Naive thymus-derived CD4-positive, alpha-beta T cell (primary cell): ENCODE measurements at regions of chr11 and their contacts with region 1.

Region 1: GRCh38 chr11:65888163-65888814 is at the start of gene FIBP:
- DNase-seq: peak; percentile 84 to 95 (median 90)
- ATAC-seq: peak; percentile 74
- H3K4me3 ChIP-seq: peak within 1 kb of the TSS; percentile 84
- H3K4me3 Mint-ChIP-seq: peak within 1 kb of the TSS; percentile 88 to 97 (median 93)
- H3K27ac ChIP-seq: peak within 1 kb of the TSS; percentile 92
- H3K27ac Mint-ChIP-seq: peak within 1 kb of the TSS; percentile 93 to 99 (median 97)
- H3K4me1 ChIP-seq: peaks cover 37 to 45% of the 10 kb centered on the region in 2 donors
- H3K4me1 Mint-ChIP-seq: peaks cover 50 to 69% (median 53%) of the 10 kb centered on the region in 7 donors
- H3K27me3 ChIP-seq: no peaks in the 10 kb centered on the region
- H3K27me3 Mint-ChIP-seq: no peaks in the 10 kb centered on the region
- total RNA-seq, gene FIBP: 25.9 to 72.1 (median 43.4) TPM

Region 2: GRCh38 chr11:65711785-65712632 is 176.3 kb before region 1 on chr11 and contains the start of gene KAT5:
- CTCF ChIA-PET with region 1: interaction called, 10 read pairs
- POLR2A ChIA-PET with region 1: interaction called, 15 read pairs
- intact Hi-C with region 1: loop called (anchors 1 kb)
- DNase-seq: peak; percentile 95 to 99 (median 98)
- ATAC-seq: peak; percentile 87
- H3K4me3 ChIP-seq: peak within 1 kb of the TSS; percentile 100
- H3K4me3 Mint-ChIP-seq: peak within 1 kb of the TSS; percentile 91 to 99 (median 95)
- H3K27ac ChIP-seq: peak within 1 kb of the TSS; percentile 95
- H3K27ac Mint-ChIP-seq: peak within 1 kb of the TSS; percentile 93 to 100 (median 99)
- H3K4me1 ChIP-seq: peaks cover 5 to 9% of the 10 kb centered on the region in 2 donors
- H3K4me1 Mint-ChIP-seq: peaks cover 12 to 41% (median 25%) of the 10 kb centered on the region in 7 donors
- H3K27me3 ChIP-seq: no peaks in the 10 kb centered on the region
- H3K27me3 Mint-ChIP-seq: peaks cover 0 to 5% (median 0%) of the 10 kb centered on the region in 5 donors
- total RNA-seq, gene KAT5: 68.6 to 133 (median 113) TPM

Region 3: GRCh38 chr11:65833297-65834030 is 54.8 kb before region 1 on chr11 and contains the start of gene SNX32:
- CTCF ChIA-PET with region 1: interaction called, 11 read pairs
- POLR2A ChIA-PET with region 1: interaction called, 6 read pairs
- intact Hi-C with region 1: no loop called
- DNase-seq: peak; percentile 88 to 94 (median 93)
- ATAC-seq: peak; percentile 100
- H3K4me3 ChIP-seq: peak within 1 kb of the TSS; percentile 91
- H3K4me3 Mint-ChIP-seq: no peak within 1 kb of the TSS
- H3K27ac ChIP-seq: peak within 1 kb of the TSS; percentile 78
- H3K27ac Mint-ChIP-seq: peak within 1 kb of the TSS in 1 of 9 donors; percentile 91
- H3K4me1 ChIP-seq: peaks cover 10 to 13% of the 10 kb centered on the region in 2 donors
- H3K4me1 Mint-ChIP-seq: peaks cover 7 to 17% (median 7%) of the 10 kb centered on the region in 7 donors
- H3K27me3 ChIP-seq: no peaks in the 10 kb centered on the region
- H3K27me3 Mint-ChIP-seq: peaks cover 0 to 21% (median 0%) of the 10 kb centered on the region in 5 donors
- total RNA-seq, gene SNX32: 0.81 to 2.0 (median 1.1) TPM

Region 4: DNA sequence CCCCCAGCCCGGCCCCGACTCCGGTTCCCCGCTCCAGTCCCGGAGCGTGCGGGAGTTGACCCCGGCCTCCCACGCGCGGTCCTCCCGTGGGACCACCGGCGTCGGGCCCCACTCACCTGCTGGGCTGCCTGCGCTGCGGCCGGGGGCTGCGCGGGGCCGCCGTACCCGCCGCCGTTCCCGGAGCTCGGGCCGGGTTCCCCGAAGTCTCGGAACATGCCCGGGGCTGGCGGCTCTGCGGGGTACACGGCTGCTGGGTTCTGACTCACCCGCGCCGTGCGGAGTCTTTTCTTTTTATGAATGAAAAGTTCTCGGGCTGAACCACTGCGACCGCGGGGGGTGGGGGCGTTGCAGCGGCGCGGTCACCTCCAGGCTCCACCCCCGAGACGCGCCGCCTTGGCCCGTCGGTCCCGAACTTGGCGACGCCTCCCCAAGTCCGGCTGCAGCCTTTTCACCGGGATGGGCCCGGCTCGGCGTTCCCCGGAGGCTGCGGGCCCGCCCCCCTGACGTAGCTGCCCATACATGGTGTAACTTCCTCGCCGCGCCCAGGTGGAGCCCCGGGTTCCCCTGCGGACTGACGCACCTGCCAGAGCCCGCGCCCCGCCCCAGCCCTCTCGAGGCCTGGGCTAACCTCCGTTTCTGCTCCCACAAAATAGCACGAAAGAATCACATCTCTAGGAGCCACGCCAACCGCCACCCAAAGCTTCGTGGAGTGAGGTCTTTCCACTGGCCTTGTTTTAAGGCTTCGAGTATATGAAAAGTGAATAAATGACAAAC is 12.0 kb after region 1 on chr11 and contains the start of gene FOSL1:
- CTCF ChIA-PET with region 1: interaction called, 36 read pairs
- POLR2A ChIA-PET with region 1: interaction called, 108 read pairs
- intact Hi-C with region 1: loop called (anchors 1 kb)
- DNase-seq: peak; percentile 83 to 97 (median 89)
- ATAC-seq: peak; percentile 95
- H3K4me3 ChIP-seq: peak within 1 kb of the TSS; percentile 51
- H3K4me3 Mint-ChIP-seq: peak within 1 kb of the TSS; percentile 64 to 81 (median 74)
- H3K27ac ChIP-seq: peak within 1 kb of the TSS; percentile 47
- H3K27ac Mint-ChIP-seq: peak within 1 kb of the TSS in 6 of 9 donors; percentile 43 to 88 (median 80)
- H3K4me1 ChIP-seq: peaks cover 17 to 19% of the 10 kb centered on the region in 2 donors
- H3K4me1 Mint-ChIP-seq: peaks cover 6 to 42% (median 10%) of the 10 kb centered on the region in 7 donors
- H3K27me3 ChIP-seq: peaks cover 0 to 6% of the 10 kb centered on the region in 2 donors
- H3K27me3 Mint-ChIP-seq: peaks cover 0 to 11% (median 3%) of the 10 kb centered on the region in 5 donors
- total RNA-seq, gene FOSL1: 2.8 to 25.7 (median 4.0) TPM in 3 of 5 experiments, not detected in the others

Region 5: DNA sequence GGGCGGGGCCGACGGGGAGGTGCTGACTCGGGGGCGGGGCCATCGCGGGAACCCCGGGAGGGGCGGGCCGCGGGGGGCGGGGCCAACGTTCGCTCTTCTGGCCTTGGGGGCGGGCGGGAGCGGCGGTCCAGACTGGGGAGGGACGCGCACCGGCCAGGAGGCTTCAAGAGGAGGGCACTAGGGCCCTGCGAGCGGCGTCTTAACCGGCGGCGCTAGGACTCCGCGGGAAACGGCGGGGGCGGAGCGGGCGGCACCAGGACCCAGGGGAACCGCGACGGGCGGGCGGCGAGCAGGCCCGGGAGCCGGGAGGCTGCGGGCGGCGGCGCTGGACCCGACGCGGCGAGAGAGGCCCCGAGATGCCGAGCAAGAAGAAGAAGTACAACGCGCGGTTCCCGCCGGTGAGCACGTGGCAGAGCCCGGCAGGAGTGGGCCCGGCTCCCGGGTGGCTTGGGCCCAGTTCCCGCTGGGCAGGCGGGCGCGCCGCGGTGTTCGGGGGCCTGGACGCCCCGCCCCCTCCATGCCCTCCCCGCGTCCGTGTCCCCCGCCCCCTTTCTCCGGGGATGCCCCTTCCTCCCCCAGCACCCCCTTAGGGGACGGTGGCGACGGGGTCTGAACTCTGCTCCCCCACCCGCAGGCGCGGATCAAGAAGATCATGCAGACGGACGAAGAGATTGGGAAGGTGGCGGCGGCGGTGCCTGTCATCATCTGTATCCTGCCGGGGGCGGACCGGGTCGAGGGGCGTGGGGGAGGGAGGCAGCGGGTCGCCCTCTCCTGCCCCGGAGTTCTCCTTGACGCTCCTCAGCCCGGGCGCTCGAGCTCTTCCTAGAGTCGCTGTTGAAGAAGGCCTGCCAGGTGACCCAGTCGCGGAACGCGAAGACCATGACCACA is 31.1 kb after region 1 on chr11 and contains the start of gene DRAP1:
- CTCF ChIA-PET with region 1: interaction called, 13 read pairs
- POLR2A ChIA-PET with region 1: interaction called, 54 read pairs
- intact Hi-C with region 1: loop called (anchors 1 kb)
- DNase-seq: peak; percentile 95 to 98 (median 97)
- ATAC-seq: peak; percentile 93
- H3K4me3 ChIP-seq: peak within 1 kb of the TSS; percentile 83
- H3K4me3 Mint-ChIP-seq: peak within 1 kb of the TSS; percentile 86 to 96 (median 93)
- H3K27ac ChIP-seq: peak within 1 kb of the TSS; percentile 95
- H3K27ac Mint-ChIP-seq: peak within 1 kb of the TSS; percentile 79 to 96 (median 90)
- H3K4me1 ChIP-seq: peaks cover 26 to 28% of the 10 kb centered on the region in 2 donors
- H3K4me1 Mint-ChIP-seq: peaks cover 32 to 61% (median 36%) of the 10 kb centered on the region in 7 donors
- H3K27me3 ChIP-seq: no peaks in the 10 kb centered on the region
- H3K27me3 Mint-ChIP-seq: no peaks in the 10 kb centered on the region
- total RNA-seq, gene DRAP1: 72.6 to 166 (median 81.9) TPM

Region 6: GRCh38 chr11:65988791-65989592 is 100.7 kb after region 1 on chr11:
- CTCF ChIA-PET with region 1: interaction called, 85 read pairs
- POLR2A ChIA-PET with region 1: interaction called, 14 read pairs
- intact Hi-C with region 1: loop called (anchors 1 kb)
- DNase-seq: peak; percentile 66 to 95 (median 91)
- ATAC-seq: peak; percentile 100
- H3K4me3 ChIP-seq: no peak overlapping the region
- H3K4me3 Mint-ChIP-seq: no peak overlapping the region
- H3K27ac ChIP-seq: no peak overlapping the region
- H3K27ac Mint-ChIP-seq: peak overlapping the region; percentile 0 to 90 (median 74)
- H3K4me1 ChIP-seq: no peaks in the 10 kb centered on the region
- H3K4me1 Mint-ChIP-seq: peaks cover 5 to 7% (median 6%) of the 10 kb centered on the region in 7 donors
- H3K27me3 ChIP-seq: no peaks in the 10 kb centered on the region
- H3K27me3 Mint-ChIP-seq: no peaks in the 10 kb centered on the region

Region 7: DNA sequence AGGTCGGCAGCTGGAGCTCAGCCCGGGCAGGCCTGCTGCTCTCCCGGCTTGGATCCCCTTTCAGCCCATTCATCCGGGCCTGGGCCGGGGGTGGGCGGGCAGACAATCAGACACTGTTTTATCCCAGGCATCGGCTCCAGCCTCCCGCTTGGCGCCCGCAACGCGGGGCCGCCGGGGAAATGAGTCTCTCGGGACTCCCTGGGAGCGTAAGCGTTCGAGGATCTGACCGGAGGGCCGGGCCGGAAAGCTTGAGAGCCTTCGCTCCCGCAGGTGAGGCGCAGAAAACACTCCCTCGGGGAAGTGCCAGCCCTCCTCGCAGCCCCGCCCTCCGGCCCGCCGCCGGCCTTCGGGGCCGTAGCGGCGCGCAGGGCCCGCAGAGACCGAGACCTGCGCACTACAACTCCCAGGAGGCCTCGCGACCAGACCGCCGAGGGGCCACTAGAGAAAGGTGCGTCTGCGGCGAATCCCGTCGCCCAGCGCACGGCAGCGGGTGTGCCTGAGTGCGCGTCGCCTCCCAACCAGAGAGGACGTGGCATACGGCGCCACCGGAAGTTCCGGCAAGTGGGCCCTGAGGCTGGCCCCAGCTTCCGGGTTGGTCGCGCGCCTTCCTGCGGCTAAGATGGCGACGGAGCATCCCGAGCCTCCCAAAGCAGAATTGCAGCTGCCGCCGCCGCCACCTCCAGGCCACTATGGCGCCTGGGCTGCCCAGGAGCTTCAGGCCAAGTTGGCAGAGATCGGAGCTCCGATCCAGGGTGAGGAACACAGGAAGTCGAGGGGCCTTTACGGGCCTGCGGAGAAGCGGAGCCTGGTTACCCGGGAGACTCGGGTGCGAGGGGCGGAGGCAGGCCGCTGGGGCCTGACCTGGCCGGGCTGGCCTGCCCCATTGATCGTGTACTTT is 163.7 kb after region 1 on chr11 and contains the start of gene SF3B2:
- CTCF ChIA-PET with region 1: no interaction called
- POLR2A ChIA-PET with region 1: interaction called, 6 read pairs
- intact Hi-C with region 1: loop called in 1 of 2 experiments (anchors 1 kb)
- DNase-seq: peak; percentile 81 to 94 (median 93)
- ATAC-seq: peak; percentile 99
- H3K4me3 ChIP-seq: peak within 1 kb of the TSS; percentile 88
- H3K4me3 Mint-ChIP-seq: peak within 1 kb of the TSS; percentile 95 to 100 (median 98)
- H3K27ac ChIP-seq: peak within 1 kb of the TSS; percentile 93
- H3K27ac Mint-ChIP-seq: peak within 1 kb of the TSS; percentile 95 to 99 (median 98)
- H3K4me1 ChIP-seq: peaks cover 14 to 18% of the 10 kb centered on the region in 2 donors
- H3K4me1 Mint-ChIP-seq: peaks cover 17 to 44% (median 38%) of the 10 kb centered on the region in 7 donors
- H3K27me3 ChIP-seq: no peaks in the 10 kb centered on the region
- H3K27me3 Mint-ChIP-seq: peaks cover 0 to 9% (median 0%) of the 10 kb centered on the region in 5 donors
- total RNA-seq, gene SF3B2: 163 to 248 (median 206) TPM